ENCODE measurements at regions of chr19 and their contacts with region 1.

Region 1: GRCh38 chr19:11798391-11799330 is at the start of gene ZNF491:
- DNase-seq: peak; percentile 64 to 91 (median 80)
- ATAC-seq: peak; percentile 98
- H3K4me3 ChIP-seq: peak within 1 kb of the TSS; percentile 73
- H3K4me3 Mint-ChIP-seq: peak within 1 kb of the TSS; percentile 93
- H3K27ac ChIP-seq: peak within 1 kb of the TSS; percentile 17
- H3K27ac Mint-ChIP-seq: peak within 1 kb of the TSS; percentile 79
- H3K4me1 ChIP-seq: peaks cover 22% of the 10 kb centered on the region
- H3K4me1 Mint-ChIP-seq: peaks cover 22% of the 10 kb centered on the region
- H3K27me3 ChIP-seq: no peaks in the 10 kb centered on the region
- H3K27me3 Mint-ChIP-seq: no peaks in the 10 kb centered on the region
- CTCF ChIP-seq: no peak
- total RNA-seq, gene ZNF491: 0.41 to 1.1 TPM

Region 2: GRCh38 chr19:10380313-10381102 is 1418.2 kb before region 1 on chr19 and contains the start of gene TYK2:
- CTCF ChIA-PET with region 1: no interaction called
- POLR2A ChIA-PET with region 1: no interaction called
- intact Hi-C with region 1: no loop called
- DNase-seq: peak; percentile 88 to 99 (median 95)
- ATAC-seq: peak; percentile 96
- H3K4me3 ChIP-seq: peak within 1 kb of the TSS; percentile 81
- H3K4me3 Mint-ChIP-seq: peak within 1 kb of the TSS; percentile 92
- H3K27ac ChIP-seq: peak within 1 kb of the TSS; percentile 81 to 84
- H3K27ac Mint-ChIP-seq: peak within 1 kb of the TSS; percentile 77
- H3K4me1 ChIP-seq: peaks cover 25% of the 10 kb centered on the region
- H3K4me1 Mint-ChIP-seq: peaks cover 24% of the 10 kb centered on the region
- H3K27me3 ChIP-seq: no peaks in the 10 kb centered on the region
- H3K27me3 Mint-ChIP-seq: no peaks in the 10 kb centered on the region
- CTCF ChIP-seq: no peak
- total RNA-seq, gene TYK2: 229 to 253 TPM

Region 3: DNA sequence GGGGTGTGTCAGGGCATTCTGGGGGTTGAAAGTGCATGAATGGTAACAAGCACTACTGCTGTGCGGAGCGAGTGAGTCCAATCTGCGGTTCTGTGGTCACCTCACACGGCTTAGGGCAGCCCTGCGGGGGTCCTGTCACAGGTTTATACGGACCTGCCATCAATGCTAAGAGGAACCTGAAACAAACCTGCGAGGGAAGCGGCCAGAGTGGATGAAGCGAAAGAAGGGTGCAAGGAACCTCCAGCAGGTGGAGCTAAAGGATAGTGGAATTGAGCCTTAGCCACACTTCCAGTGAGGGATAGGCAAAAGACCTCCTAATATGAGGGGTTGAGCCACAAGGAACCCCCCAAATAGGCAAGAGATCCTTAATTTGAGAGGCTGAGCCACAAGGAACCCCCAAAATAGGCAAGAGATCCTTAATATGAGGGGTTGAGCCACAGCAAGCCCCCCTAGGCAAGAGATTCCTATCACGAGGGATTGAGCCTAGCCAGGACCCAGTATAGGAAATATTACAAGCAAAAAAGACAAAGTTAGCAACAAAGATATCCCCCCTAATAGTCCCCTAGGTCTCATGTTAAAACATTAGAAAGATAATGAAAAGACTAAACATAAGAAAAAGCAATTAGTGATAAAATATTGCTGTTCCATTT is 82.6 kb after region 1 on chr19:
- CTCF ChIA-PET with region 1: interaction called, 6 read pairs
- POLR2A ChIA-PET with region 1: no interaction called
- intact Hi-C with region 1: loop called in 1 of 2 experiments (anchors 2 kb)
- DNase-seq: peak; percentile 39 to 82 (median 54)
- ATAC-seq: peak; percentile 60
- H3K4me3 ChIP-seq: no peak overlapping the region
- H3K4me3 Mint-ChIP-seq: no peak overlapping the region
- H3K27ac ChIP-seq: no peak overlapping the region
- H3K27ac Mint-ChIP-seq: no peak overlapping the region
- H3K4me1 ChIP-seq: peaks cover 4% of the 10 kb centered on the region
- H3K4me1 Mint-ChIP-seq: no peaks in the 10 kb centered on the region
- H3K27me3 ChIP-seq: no peaks in the 10 kb centered on the region
- H3K27me3 Mint-ChIP-seq: no peaks in the 10 kb centered on the region
- CTCF ChIP-seq: peak; percentile 74

Region 4: DNA sequence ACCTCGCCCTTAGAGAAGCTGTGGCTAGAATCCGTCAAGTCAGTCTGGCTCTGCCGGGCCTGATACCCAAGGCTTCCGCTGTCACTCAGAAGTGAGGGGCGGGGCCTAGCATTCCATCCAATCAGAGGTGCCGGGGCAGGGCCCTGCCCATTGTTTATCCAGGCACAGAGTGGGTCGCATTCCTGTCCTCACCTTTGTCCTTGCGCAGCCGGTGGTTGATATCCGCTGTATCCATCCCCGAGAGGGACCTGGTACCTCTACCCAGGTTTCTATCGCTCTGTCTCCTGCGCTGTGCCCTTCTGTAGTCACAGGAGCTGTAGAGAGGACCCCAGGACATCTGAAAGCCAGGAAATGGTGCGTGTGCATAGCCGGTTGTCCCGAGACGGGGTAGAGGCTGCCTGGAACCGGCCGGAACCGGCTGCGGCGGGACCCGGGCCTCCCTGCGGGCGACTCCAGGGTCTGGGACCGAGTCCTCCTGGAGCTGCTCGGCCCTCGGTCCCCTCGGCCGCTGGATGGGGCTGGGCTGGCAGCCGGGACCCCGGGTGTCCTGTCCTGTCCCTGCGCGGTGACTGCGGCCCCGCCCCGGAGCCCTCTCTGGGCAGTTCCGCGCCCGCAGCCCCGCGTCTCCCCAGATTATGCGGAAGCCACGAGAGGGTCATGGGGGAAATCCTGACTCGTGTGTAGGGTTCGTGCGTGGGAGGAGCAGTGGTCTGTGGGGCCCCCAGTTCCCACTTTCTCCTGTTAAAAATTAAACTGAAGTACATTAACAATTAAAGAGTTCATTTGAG is 166.4 kb after region 1 on chr19 and contains the start of gene ZNF763:
- CTCF ChIA-PET with region 1: interaction called, 17 read pairs
- POLR2A ChIA-PET with region 1: interaction called, 3 read pairs
- intact Hi-C with region 1: no loop called
- DNase-seq: peak; percentile 80 to 95 (median 86)
- ATAC-seq: peak; percentile 93
- H3K4me3 ChIP-seq: peak within 1 kb of the TSS; percentile 67
- H3K4me3 Mint-ChIP-seq: peak within 1 kb of the TSS; percentile 95
- H3K27ac ChIP-seq: peak within 1 kb of the TSS; percentile 80 to 83
- H3K27ac Mint-ChIP-seq: peak within 1 kb of the TSS; percentile 88
- H3K4me1 ChIP-seq: peaks cover 28% of the 10 kb centered on the region
- H3K4me1 Mint-ChIP-seq: peaks cover 27% of the 10 kb centered on the region
- H3K27me3 ChIP-seq: no peaks in the 10 kb centered on the region
- H3K27me3 Mint-ChIP-seq: no peaks in the 10 kb centered on the region
- CTCF ChIP-seq: no peak
- total RNA-seq, gene ZNF763: 2.5 to 2.9 TPM

Region 5: DNA sequence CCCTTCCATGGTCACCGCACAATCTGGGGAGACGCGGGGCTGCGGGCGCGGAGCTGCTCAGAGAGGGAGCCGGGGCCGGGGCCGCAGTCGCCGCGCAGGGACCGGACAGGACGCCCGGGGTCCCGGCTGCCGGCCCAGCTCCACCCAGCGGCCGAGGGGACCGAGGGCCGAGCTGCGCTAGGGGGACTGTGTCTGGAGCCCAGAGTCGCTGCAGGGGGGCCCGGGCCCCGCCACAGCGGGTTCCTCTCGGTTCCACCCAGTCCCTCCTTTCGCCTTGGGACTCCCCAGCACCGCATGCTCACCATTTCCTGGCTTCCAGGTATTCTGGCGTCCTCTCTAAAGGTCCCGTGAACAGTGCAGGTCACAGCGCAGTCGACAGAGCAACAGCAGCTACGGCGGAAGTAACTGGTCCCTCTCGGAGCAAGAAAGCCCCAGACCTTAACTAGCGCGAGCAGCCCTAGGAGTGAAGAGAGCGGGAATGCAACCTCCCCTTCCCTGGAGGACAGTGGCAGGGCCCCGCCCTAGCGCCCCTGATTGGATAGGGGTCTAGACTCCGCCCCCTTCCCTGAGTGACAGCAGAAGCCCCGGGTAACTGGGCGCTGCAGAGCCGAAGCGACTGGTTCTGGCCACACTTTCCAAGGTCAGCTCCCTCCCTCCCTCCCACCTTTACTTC is 254.0 kb after region 1 on chr19 and contains the start of gene ZNF878:
- CTCF ChIA-PET with region 1: no interaction called
- POLR2A ChIA-PET with region 1: no interaction called
- intact Hi-C with region 1: loop called in 1 of 2 experiments (anchors 5 kb)
- DNase-seq: peak in 12 of 14 experiments; percentile 15 to 68 (median 30)
- ATAC-seq: peak; percentile 71
- H3K4me3 ChIP-seq: peak within 1 kb of the TSS; percentile 60
- H3K4me3 Mint-ChIP-seq: peak within 1 kb of the TSS; percentile 90
- H3K27ac ChIP-seq: no peak within 1 kb of the TSS
- H3K27ac Mint-ChIP-seq: no peak within 1 kb of the TSS
- H3K4me1 ChIP-seq: peaks cover 16% of the 10 kb centered on the region
- H3K4me1 Mint-ChIP-seq: peaks cover 17% of the 10 kb centered on the region
- H3K27me3 ChIP-seq: peaks cover 0 to 7% of the 10 kb centered on the region in 2 experiments
- H3K27me3 Mint-ChIP-seq: peaks cover 34% of the 10 kb centered on the region
- CTCF ChIP-seq: no peak
- total RNA-seq, gene ZNF878: not detected